A549 (cell line): ENCODE measurements at regions of chr9 and their contacts with region 1.

Region 1: DNA sequence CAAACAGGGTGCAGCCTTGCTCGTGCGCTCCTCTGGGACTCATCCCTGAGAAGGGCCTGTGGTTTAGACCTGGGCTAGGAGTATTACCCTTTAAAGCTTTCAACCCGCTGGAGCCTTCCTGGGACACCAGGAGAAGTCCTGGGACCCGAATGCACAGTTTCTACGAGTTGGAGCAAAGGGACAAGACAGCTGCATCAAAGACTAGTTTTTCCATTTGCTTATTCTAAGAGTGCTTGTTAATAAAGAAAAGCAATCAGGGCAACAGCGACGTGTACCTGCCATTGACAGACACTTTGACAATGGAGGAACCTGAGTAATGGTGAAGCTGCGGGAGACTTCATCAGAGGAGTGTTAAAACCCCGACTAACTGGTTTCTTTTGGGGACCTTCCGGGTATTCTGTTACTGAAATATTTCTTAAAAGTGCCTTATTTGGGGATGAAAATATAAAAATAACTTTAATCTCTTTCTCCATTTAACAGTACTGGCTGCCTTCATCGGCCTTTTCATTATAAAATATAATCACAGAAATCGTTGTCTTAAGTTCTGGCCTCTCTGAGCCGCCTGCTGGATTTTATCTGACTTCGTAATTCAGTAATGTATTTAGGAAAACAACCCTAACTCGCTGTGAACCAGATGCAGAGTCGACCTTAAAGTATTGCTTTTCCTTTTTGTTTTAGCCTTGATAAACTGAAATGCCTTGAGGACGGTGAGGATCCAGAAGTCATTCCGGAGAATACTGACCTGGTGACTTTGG is 732 bp downstream of the SNAPC3 start:
- DNase-seq: peak; percentile 28 to 35
- ATAC-seq: peak; percentile 67 to 71
- H3K4me3 ChIP-seq: peak overlapping the region; percentile 79
- H3K27ac ChIP-seq: peak overlapping the region; percentile 90 to 98
- H3K4me1 ChIP-seq: peaks cover 26% of the 10 kb centered on the region
- CTCF ChIP-seq: no peak; the same call in 2 of the 3 replicates
- EP300 ChIP-seq: no peak
- POLR2A ChIP-seq: no peak
- RAD21 ChIP-seq: no peak

Region 2: GRCh38 chr9:15469406-15469805 is 46.0 kb after region 1 on chr9:
- CTCF ChIA-PET with region 1: no interaction called
- POLR2A ChIA-PET with region 1: interaction called, 12 read pairs
- DNase-seq: no peak
- ATAC-seq: no peak
- H3K4me3 ChIP-seq: no peak overlapping the region
- H3K27ac ChIP-seq: no peak overlapping the region
- H3K4me1 ChIP-seq: no peaks in the 10 kb centered on the region
- CTCF ChIP-seq: no peak
- EP300 ChIP-seq: no peak
- POLR2A ChIP-seq: no peak
- RAD21 ChIP-seq: no peak